Naive thymus-derived CD8-positive, alpha-beta T cell (primary cell): ENCODE measurements at regions of chr2 and their contacts with region 1.

Region 1: GRCh38 chr2:28406276-28407096 is 13.8 kb downstream of the FOSL2 start:
- DNase-seq: peak in 9 of 10 donors; percentile 31 to 68 (median 51)
- ATAC-seq: peak; percentile 21 to 51
- H3K4me3 Mint-ChIP-seq: peak overlapping the region in 6 of 10 donors; percentile 22 to 80 (median 40)
- H3K27ac Mint-ChIP-seq: peak overlapping the region; percentile 77 to 100 (median 90)
- H3K4me1 Mint-ChIP-seq: peaks cover 49 to 89% (median 81%) of the 10 kb centered on the region in 4 donors
- H3K27me3 Mint-ChIP-seq: no peaks in the 10 kb centered on the region

Region 2: DNA sequence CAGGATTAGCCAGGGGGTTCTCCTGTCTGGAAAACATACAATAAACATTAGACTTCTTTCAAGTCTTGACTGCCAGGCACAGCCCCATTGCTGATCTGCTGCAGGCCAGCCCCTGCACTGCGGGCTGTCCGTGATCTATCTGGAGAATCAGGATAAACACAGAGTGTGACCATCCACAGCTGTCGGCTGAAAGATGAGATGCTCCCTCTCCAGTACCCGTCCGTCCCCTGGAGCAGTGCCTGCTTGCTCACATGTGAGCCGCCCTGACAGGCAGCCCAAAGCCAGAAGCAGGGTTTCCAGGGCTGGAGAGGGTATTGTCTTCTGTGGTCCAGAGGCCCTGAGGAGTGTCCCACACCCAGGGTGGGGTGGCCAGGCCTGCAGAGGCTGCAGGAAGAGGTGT is 59.9 kb before region 1 on chr2:
- POLR2A ChIA-PET with region 1: no interaction called
- DNase-seq: no peak
- ATAC-seq: no peak
- H3K4me3 Mint-ChIP-seq: no peak overlapping the region
- H3K27ac Mint-ChIP-seq: peak overlapping the region in 5 of 10 donors; percentile 36 to 74 (median 61)
- H3K4me1 Mint-ChIP-seq: peaks cover 10 to 31% (median 27%) of the 10 kb centered on the region in 4 donors
- H3K27me3 Mint-ChIP-seq: no peaks in the 10 kb centered on the region

Region 3: GRCh38 chr2:28392297-28393113 is 14.0 kb before region 1 on chr2 and contains the start of gene FOSL2:
- POLR2A ChIA-PET with region 1: interaction called, 37 read pairs
- DNase-seq: peak; percentile 82 to 98 (median 94)
- ATAC-seq: peak; percentile 79 to 81
- H3K4me3 Mint-ChIP-seq: peak within 1 kb of the TSS in 9 of 10 donors; percentile 78 to 98 (median 92)
- H3K27ac Mint-ChIP-seq: peak within 1 kb of the TSS; percentile 93 to 100 (median 98)
- H3K4me1 Mint-ChIP-seq: peaks cover 13 to 32% (median 19%) of the 10 kb centered on the region in 4 donors
- H3K27me3 Mint-ChIP-seq: peaks cover 0 to 2% (median 0%) of the 10 kb centered on the region in 5 donors
- polyA plus RNA-seq, gene FOSL2: 0.46 to 6.5 (median 0.85) TPM

Region 4: DNA sequence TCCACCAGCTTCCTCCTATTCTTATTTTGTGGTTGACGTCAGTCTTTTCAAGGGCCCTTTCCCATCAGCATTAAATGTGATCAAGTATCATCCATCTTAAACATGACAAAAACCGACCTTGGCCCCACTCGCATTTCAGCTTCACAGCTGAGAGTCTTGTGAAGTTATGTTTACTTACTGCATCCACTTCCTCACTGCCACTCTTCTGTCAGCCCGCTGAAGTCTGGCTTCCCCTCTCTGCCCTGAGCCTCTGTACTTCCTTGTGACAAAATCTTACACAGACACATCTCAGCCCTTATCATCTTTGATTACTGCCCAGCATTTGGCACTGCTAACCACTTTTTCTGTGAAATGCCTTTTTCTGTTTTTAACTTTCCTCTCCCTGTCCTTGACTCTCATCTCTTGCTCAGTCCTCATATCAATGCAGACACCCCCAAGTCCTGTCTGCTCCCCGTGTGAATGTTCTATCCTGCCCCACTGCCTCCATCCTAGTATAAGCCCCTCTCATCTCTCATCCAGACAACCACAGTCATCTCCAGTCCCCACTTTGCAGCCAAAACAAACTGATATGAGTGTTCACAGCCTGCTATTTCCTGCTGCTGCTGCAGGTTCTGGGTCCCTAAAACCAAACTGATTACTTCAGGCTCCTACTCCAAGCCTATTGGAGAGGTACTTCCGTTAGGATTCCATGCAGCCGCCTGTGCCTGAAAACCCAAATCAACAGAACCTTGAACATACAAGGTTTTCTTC is 17.5 kb after region 1 on chr2:
- POLR2A ChIA-PET with region 1: interaction called, 12 read pairs
- DNase-seq: peak in 8 of 10 donors; percentile 22 to 71 (median 58)
- ATAC-seq: peak; percentile 86 to 93
- H3K4me3 Mint-ChIP-seq: peak overlapping the region; percentile 69 to 88 (median 82)
- H3K27ac Mint-ChIP-seq: peak overlapping the region; percentile 96 to 100 (median 98)
- H3K4me1 Mint-ChIP-seq: peaks cover 27 to 56% (median 45%) of the 10 kb centered on the region in 4 donors
- H3K27me3 Mint-ChIP-seq: no peaks in the 10 kb centered on the region